ENCODE measurements at regions of chr10 and their contacts with region 1.

Region 1: GRCh38 chr10:118701529-118702323 is 53.0 kb downstream of the CACUL1 start:
- DNase-seq: no peak
- H3K4me3 ChIP-seq: no peak overlapping the region
- CTCF ChIP-seq: no peak

Region 2: GRCh38 chr10:118594392-118595063 is 107.2 kb before region 1 on chr10:
- in situ Hi-C with region 1: loop called (anchors 5 kb)
- DNase-seq: peak; percentile 31
- H3K4me3 ChIP-seq: no peak overlapping the region
- CTCF ChIP-seq: peak; percentile 18